Natural killer cell (primary cell): ENCODE measurements at regions of chr4 and their contacts with region 1.

Region 1: GRCh38 chr4:145180298-145181090 is at the start of gene OTUD4:
- DNase-seq: peak; percentile 94 to 97
- ATAC-seq: peak; percentile 78 to 95 (median 84)
- H3K4me3 ChIP-seq: peak within 1 kb of the TSS; percentile 82
- H3K4me3 Mint-ChIP-seq: peak within 1 kb of the TSS; percentile 95
- H3K27ac ChIP-seq: peak within 1 kb of the TSS; percentile 99
- H3K27ac Mint-ChIP-seq: peak within 1 kb of the TSS; percentile 95 to 97
- H3K4me1 ChIP-seq: peaks cover 25% of the 10 kb centered on the region
- H3K4me1 Mint-ChIP-seq: peaks cover 36 to 37% of the 10 kb centered on the region in 2 donors
- H3K27me3 ChIP-seq: no peaks in the 10 kb centered on the region
- H3K27me3 Mint-ChIP-seq: no peaks in the 10 kb centered on the region
- CTCF ChIP-seq: no peak
- total RNA-seq, gene OTUD4: 60.0 to 73.3 (median 71.6) TPM

Region 2: DNA sequence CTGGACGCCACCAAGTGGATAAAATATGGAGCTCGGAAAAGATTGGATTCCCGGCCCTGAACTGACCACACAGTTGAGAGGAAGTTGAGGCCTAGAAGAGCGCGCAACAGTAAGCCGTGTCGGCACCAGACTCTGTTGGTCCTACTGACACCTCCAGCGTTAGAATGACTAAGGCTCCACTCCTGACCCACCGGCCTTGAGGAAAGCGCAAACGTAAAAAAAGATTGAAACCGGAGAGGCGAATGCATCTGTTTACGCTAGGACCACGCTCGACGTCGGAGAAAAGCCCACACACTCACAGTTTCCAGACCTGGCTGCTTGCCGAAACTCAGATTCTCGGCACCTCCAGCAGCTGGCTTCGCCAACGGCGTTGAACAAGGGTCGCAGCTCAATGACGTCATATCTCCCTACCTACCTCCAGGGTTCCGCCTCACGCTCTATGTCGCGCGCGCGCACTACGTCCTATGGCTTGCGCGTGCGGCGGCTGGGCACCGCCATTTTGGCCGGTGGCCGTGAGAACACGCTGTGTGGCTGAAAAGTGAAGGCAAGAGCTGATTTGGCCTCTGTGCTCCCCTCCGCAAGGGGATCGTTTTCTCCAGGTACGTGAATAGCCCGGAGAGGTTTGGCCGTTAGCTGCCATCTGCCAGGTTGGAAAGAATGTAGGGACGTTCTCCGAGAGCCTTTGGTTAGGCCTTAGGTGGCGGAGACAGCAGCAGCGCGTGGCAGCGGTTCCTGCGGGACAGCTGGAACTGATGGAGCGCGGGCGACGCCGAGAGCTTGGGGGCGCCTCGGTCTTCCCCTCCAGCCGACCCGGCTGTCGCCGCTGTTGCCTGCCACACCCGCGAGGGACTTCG is 82.4 kb before region 1 on chr4 and contains the starts of genes ABCE1 and ANAPC10:
- intact Hi-C with region 1: loop called (anchors 1 kb)
- DNase-seq: peak; percentile 90 to 99
- ATAC-seq: peak; percentile 88 to 96 (median 94)
- H3K4me3 ChIP-seq: peak within 1 kb of the TSS; percentile 83
- H3K4me3 Mint-ChIP-seq: peak within 1 kb of the TSS; percentile 92
- H3K27ac ChIP-seq: peak within 1 kb of the TSS; percentile 84
- H3K27ac Mint-ChIP-seq: peak within 1 kb of the TSS; percentile 92 to 95
- H3K4me1 ChIP-seq: peaks cover 19% of the 10 kb centered on the region
- H3K4me1 Mint-ChIP-seq: peaks cover 25 to 43% of the 10 kb centered on the region in 2 donors
- H3K27me3 ChIP-seq: no peaks in the 10 kb centered on the region
- H3K27me3 Mint-ChIP-seq: no peaks in the 10 kb centered on the region
- CTCF ChIP-seq: no peak
- total RNA-seq, gene ABCE1: 25.8 to 33.8 (median 31.7) TPM
- total RNA-seq, gene ANAPC10: 27.9 to 37.7 (median 37.7) TPM

Region 3: DNA sequence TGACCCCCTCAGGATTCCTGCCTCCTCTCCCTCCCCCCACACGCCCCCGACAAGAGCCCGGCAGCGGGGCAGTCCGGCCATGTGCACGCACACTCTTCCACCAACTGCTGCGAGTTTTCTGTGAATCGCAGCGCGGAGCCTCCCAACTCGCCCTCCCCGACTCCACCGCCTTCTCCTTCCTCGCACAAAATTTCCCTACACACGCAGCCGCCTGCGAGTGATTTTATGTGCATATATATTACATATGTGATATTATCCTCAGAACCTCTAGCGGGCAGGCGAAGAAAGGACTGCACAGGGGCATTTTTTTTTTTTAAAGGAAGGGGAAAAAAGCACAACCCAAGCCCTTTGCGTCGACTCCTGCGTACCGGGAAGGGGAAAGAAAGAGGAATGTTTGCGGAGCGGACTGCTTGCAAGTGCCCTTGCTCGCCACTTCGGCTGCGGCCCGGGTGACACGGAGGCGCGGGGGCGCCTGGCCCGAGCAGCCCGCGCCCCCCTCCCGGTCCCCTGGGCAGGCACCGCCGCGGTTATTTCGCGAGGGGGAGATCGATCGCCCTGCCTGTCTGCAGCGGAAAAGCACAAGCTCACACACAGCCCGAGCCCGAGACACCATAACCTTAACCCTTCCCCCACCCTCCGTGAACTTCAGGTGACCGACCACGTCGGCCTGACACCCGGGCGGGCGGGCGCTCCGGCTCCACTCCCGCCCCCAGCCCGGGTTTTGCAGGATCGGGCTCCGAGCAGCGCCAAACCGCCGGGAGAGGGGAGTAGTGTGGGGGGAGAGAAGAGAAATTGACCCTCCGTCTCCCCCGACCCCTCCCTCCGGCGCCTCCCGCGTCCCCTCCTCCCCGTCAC is 755.9 kb after region 1 on chr4:
- intact Hi-C with region 1: loop called (anchors 5 kb)
- DNase-seq: peak; percentile 60 to 85
- ATAC-seq: peak; percentile 53 to 78 (median 71)
- H3K4me3 ChIP-seq: peak overlapping the region; percentile 93
- H3K4me3 Mint-ChIP-seq: peak overlapping the region; percentile 88
- H3K27ac ChIP-seq: peak overlapping the region; percentile 74
- H3K27ac Mint-ChIP-seq: peak overlapping the region; percentile 86 to 94
- H3K4me1 ChIP-seq: peaks cover 16% of the 10 kb centered on the region
- H3K4me1 Mint-ChIP-seq: peaks cover 34 to 41% of the 10 kb centered on the region in 2 donors
- H3K27me3 ChIP-seq: no peaks in the 10 kb centered on the region
- H3K27me3 Mint-ChIP-seq: peaks cover 0 to 3% of the 10 kb centered on the region in 2 donors
- CTCF ChIP-seq: peak; percentile 36